ENCODE measurements at regions of chr5 and their contacts with region 1.

Region 1: GRCh38 chr5:150560401-150561193 is 52.7 kb downstream of the NDST1 start:
- DNase-seq: peak; percentile 88 to 92
- H3K4me3 ChIP-seq: no peak overlapping the region
- H3K4me3 Mint-ChIP-seq: peak overlapping the region; percentile 53
- H3K27ac Mint-ChIP-seq: peak overlapping the region; percentile 78
- H3K4me1 ChIP-seq: peaks cover 21% of the 10 kb centered on the region
- H3K4me1 Mint-ChIP-seq: peaks cover 25% of the 10 kb centered on the region
- H3K27me3 ChIP-seq: no peaks in the 10 kb centered on the region
- H3K27me3 Mint-ChIP-seq: no peaks in the 10 kb centered on the region
- CTCF ChIP-seq: peak; percentile 83 to 93

Region 2: GRCh38 chr5:150458819-150459557 is 101.6 kb before region 1 on chr5:
- CTCF ChIA-PET with region 1: interaction called, 26 read pairs
- POLR2A ChIA-PET with region 1: no interaction called
- intact Hi-C with region 1: loop called (anchors 1 kb)
- DNase-seq: peak; percentile 90 to 95
- H3K4me3 ChIP-seq: no peak overlapping the region
- H3K4me3 Mint-ChIP-seq: peak overlapping the region; percentile 25
- H3K27ac Mint-ChIP-seq: peak overlapping the region; percentile 19
- H3K4me1 ChIP-seq: peaks cover 10% of the 10 kb centered on the region
- H3K4me1 Mint-ChIP-seq: peaks cover 15% of the 10 kb centered on the region
- H3K27me3 ChIP-seq: no peaks in the 10 kb centered on the region
- H3K27me3 Mint-ChIP-seq: no peaks in the 10 kb centered on the region
- CTCF ChIP-seq: peak; percentile 86 to 91

Region 3: GRCh38 chr5:150595466-150596031 is 35.0 kb after region 1 on chr5:
- CTCF ChIA-PET with region 1: no interaction called
- POLR2A ChIA-PET with region 1: no interaction called
- intact Hi-C with region 1: loop called (anchors 2 kb)
- DNase-seq: peak in 1 of 2 experiments; percentile 40
- H3K4me3 ChIP-seq: no peak overlapping the region
- H3K4me3 Mint-ChIP-seq: no peak overlapping the region
- H3K27ac Mint-ChIP-seq: peak overlapping the region; percentile 81
- H3K4me1 ChIP-seq: peaks cover 43% of the 10 kb centered on the region
- H3K4me1 Mint-ChIP-seq: peaks cover 30% of the 10 kb centered on the region
- H3K27me3 ChIP-seq: no peaks in the 10 kb centered on the region
- H3K27me3 Mint-ChIP-seq: no peaks in the 10 kb centered on the region
- CTCF ChIP-seq: no peak

Region 4: GRCh38 chr5:150656191-150657132 is 95.9 kb after region 1 on chr5:
- CTCF ChIA-PET with region 1: interaction called, 56 read pairs
- POLR2A ChIA-PET with region 1: no interaction called
- intact Hi-C with region 1: loop called (anchors 1 kb)
- DNase-seq: peak; percentile 74 to 92
- H3K4me3 ChIP-seq: peak overlapping the region; percentile 71
- H3K4me3 Mint-ChIP-seq: peak overlapping the region; percentile 79
- H3K27ac Mint-ChIP-seq: peak overlapping the region; percentile 45
- H3K4me1 ChIP-seq: peaks cover 4% of the 10 kb centered on the region; the same call in 1 of the 2 replicates
- H3K4me1 Mint-ChIP-seq: peaks cover 17% of the 10 kb centered on the region
- H3K27me3 ChIP-seq: no peaks in the 10 kb centered on the region
- H3K27me3 Mint-ChIP-seq: no peaks in the 10 kb centered on the region
- CTCF ChIP-seq: peak; percentile 74 to 87

Region 5: GRCh38 chr5:150710165-150710564 is 149.6 kb after region 1 on chr5:
- CTCF ChIA-PET with region 1: interaction called, 3 read pairs
- POLR2A ChIA-PET with region 1: no interaction called
- intact Hi-C with region 1: loop called (anchors 1 kb)
- DNase-seq: peak in 1 of 2 experiments; percentile 19
- H3K4me3 ChIP-seq: no peak overlapping the region
- H3K4me3 Mint-ChIP-seq: no peak overlapping the region
- H3K27ac Mint-ChIP-seq: no peak overlapping the region
- H3K4me1 ChIP-seq: no peaks in the 10 kb centered on the region
- H3K4me1 Mint-ChIP-seq: no peaks in the 10 kb centered on the region
- H3K27me3 ChIP-seq: no peaks in the 10 kb centered on the region
- H3K27me3 Mint-ChIP-seq: no peaks in the 10 kb centered on the region
- CTCF ChIP-seq: no peak

Region 6: GRCh38 chr5:150801117-150801927 is 240.7 kb after region 1 on chr5:
- CTCF ChIA-PET with region 1: no interaction called
- POLR2A ChIA-PET with region 1: no interaction called
- intact Hi-C with region 1: loop called (anchors 1 kb)
- DNase-seq: peak in 1 of 2 experiments; percentile 76
- H3K4me3 ChIP-seq: peak overlapping the region; percentile 28
- H3K4me3 Mint-ChIP-seq: peak overlapping the region; percentile 76
- H3K27ac Mint-ChIP-seq: peak overlapping the region; percentile 69
- H3K4me1 ChIP-seq: 0 out of 2 replicates have a peak, but pooled peaks cover 6% of the 10 kb centered on the region
- H3K4me1 Mint-ChIP-seq: peaks cover 6% of the 10 kb centered on the region
- H3K27me3 ChIP-seq: no peaks in the 10 kb centered on the region
- H3K27me3 Mint-ChIP-seq: no peaks in the 10 kb centered on the region
- CTCF ChIP-seq: peak; percentile 61

Measured in Caco-2 (cell line).